Psoas muscle (tissue), 8 donors: ENCODE measurements at regions of chr1 and their contacts with region 1.

Region 1: DNA sequence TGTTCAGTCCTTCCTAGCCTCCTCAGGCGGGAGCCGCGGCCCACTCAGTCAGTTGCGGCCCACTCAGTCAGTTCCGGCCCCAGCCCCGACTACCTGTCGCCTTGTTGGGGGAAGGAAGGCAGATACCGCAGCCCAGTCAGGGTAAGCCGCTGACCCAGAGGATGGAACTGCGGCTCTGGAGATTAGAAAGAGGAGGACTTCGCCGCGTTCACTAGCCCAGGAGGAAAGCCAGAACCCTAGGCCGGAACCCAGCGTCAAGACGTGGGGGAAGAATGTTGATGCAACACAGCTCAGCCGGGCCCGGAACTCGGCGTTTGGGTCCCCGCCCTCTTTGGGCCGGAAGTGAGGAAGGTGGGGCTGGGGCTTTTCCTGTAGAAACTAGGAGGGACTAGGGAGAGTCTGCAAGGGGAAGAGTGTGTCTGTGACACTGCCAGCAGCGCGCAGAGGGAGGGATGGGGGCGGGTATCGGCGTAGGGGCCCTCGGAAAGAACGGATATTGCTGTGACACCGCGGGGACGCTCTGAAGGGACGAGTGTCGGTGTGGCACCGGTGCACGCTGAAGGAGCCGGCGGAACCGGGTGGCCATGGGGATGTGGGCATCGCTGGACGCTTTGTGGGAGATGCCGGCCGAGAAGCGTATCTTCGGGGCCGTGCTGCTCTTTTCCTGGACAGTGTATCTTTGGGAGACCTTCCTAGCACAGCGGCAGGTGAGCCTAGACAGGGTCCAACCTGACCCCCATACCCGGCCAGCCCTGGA is at the start of gene ZMPSTE24:
- DNase-seq: peak; percentile 96 to 98
- ATAC-seq: peak; percentile 98 to 99 (median 99)
- H3K4me3 ChIP-seq: peak within 1 kb of the TSS; percentile 90
- H3K27ac ChIP-seq: peak within 1 kb of the TSS; percentile 92
- H3K4me1 ChIP-seq: peaks cover 48% of the 10 kb centered on the region
- H3K27me3 ChIP-seq: no peaks in the 10 kb centered on the region
- CTCF ChIP-seq: no peak
- total RNA-seq, gene ZMPSTE24: 12.7 to 26.1 (median 18.9) TPM

Region 2: GRCh38 chr1:40040511-40041465 is 217.1 kb before region 1 on chr1 and contains the start of gene CAP1:
- intact Hi-C with region 1: loop called in 1 of 2 experiments (anchors 10 kb)
- DNase-seq: peak; percentile 99 to 100
- ATAC-seq: peak; percentile 90 to 94 (median 92)
- H3K4me3 ChIP-seq: peak within 1 kb of the TSS; percentile 94
- H3K27ac ChIP-seq: peak within 1 kb of the TSS; percentile 100
- H3K4me1 ChIP-seq: peaks cover 59% of the 10 kb centered on the region
- H3K27me3 ChIP-seq: no peaks in the 10 kb centered on the region
- CTCF ChIP-seq: no peak
- total RNA-seq, gene CAP1: 34.2 to 71.0 (median 61.9) TPM

Region 3: GRCh38 chr1:40161125-40161887 is 96.6 kb before region 1 on chr1 and contains the start of gene RLF:
- intact Hi-C with region 1: loop called (anchors 5 to 10 kb)
- DNase-seq: peak; percentile 96 to 98
- ATAC-seq: peak; percentile 99 to 100 (median 100)
- H3K4me3 ChIP-seq: peak within 1 kb of the TSS; percentile 95
- H3K27ac ChIP-seq: peak within 1 kb of the TSS; percentile 98
- H3K4me1 ChIP-seq: peaks cover 31% of the 10 kb centered on the region
- H3K27me3 ChIP-seq: no peaks in the 10 kb centered on the region
- CTCF ChIP-seq: no peak
- total RNA-seq, gene RLF: 10.2 to 16.4 (median 11.2) TPM

Region 4: GRCh38 chr1:40519517-40519916 is 261.7 kb after region 1 on chr1:
- intact Hi-C with region 1: no loop called
- DNase-seq: no peak
- ATAC-seq: no peak
- H3K4me3 ChIP-seq: no peak overlapping the region
- H3K27ac ChIP-seq: no peak overlapping the region
- H3K4me1 ChIP-seq: no peaks in the 10 kb centered on the region
- H3K27me3 ChIP-seq: no peaks in the 10 kb centered on the region
- CTCF ChIP-seq: no peak